Transverse colon (tissue), 4 donors: ENCODE measurements at regions of chr12 and their contacts with region 1.

Region 1: DNA sequence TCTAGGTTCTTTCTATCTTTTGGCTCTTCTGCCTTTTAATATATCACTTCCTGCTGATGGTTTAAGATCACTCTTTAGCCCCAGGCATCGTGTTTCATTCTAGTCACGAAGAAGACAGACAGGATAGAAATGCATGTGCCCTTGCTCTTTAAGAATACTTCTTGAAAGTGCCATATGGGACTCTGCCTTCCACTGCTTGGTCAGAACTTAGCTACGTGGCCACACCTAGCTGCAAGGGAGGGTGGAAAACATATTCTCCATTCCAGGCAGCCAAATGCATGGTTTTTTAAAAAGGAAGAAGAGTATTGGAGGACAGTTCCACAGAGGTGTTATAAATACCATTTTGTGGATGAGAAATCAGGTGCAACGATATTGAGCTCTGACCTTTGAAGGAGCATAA is 143.3 kb downstream of the KLRB1 start:
- DNase-seq: no peak
- H3K4me3 ChIP-seq: no peak overlapping the region
- H3K27ac ChIP-seq: no peak overlapping the region
- H3K4me1 ChIP-seq: no peaks in the 10 kb centered on the region
- H3K27me3 ChIP-seq: no peaks in the 10 kb centered on the region
- CTCF ChIP-seq: no peak
- EP300 ChIP-seq: no peak
- POLR2A ChIP-seq: no peak

Region 2: DNA sequence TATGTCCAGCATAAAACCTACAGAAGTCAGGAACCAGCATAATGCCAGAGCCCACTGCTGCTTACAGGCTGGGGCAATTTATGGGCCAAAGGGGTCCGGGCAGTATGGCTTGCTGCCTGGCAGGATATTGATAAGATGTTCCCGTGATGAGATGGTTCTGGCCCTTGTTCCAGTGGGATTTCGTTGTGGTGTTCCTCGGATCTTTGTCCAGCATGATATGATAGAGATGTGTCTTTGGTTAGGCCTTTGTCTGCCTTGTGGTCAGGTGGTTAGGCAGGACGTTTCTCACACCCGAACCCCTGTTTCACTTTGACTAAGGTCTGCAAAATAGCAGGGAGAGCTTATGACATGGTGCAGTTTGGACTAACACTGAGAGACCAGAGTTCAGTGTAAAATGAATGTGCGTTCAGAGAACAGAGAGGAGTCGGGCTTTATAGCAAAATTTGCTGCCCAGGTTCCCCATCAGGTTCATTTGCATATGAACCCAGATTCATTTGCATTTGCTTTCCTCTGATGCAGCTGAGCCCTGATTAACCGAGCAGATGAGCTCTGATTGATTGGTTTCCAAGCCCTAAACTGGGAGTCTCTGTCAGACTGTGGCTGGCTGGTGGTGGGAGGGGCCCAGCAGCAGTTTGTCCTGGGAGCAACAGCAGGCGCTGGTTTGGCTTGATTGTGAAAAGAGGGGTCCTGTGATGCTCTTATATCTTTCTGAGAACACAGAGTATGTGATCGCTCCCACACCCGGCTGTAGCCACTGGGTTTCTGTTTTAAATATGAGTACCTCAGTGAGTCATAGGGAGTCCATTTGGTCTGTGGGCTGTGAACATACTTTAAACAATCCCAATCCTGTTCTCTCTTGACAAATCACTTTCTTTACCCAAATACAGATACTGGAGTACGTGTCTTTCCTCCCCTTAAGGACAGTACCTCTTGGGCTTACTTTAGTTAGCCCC is 99.9 kb before region 1 on chr12:
- in situ Hi-C with region 1: loop called in 1 of 4 experiments (anchors 25 kb)
- intact Hi-C with region 1: no loop called
- DNase-seq: peak; percentile 23
- H3K4me3 ChIP-seq: no peak overlapping the region
- H3K27ac ChIP-seq: peak overlapping the region in 1 of 4 donors; percentile 35
- H3K4me1 ChIP-seq: peaks cover 0 to 3% (median 0%) of the 10 kb centered on the region in 4 donors
- H3K27me3 ChIP-seq: no peaks in the 10 kb centered on the region
- CTCF ChIP-seq: no peak
- EP300 ChIP-seq: no peak
- POLR2A ChIP-seq: no peak

Region 3: DNA sequence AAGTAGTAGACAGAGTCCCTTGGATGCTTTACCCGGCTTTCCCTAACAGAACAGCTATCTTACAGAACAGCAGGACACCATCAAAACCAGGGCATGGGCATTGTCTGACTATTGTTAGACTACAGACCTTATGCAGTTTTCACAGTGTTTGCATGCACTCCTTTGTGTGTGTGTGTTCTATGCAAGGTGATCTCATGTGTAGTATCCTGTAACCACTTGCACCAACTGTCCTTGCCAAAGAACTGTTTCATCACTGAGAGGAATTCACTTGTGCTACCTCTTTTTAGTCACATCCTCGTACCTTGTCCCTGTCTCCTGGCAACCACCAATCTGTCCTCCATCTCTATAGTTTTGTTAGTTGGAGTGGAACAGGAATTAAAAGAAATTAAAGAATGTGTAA is 72.6 kb before region 1 on chr12:
- in situ Hi-C with region 1: no loop called
- intact Hi-C with region 1: no loop called
- DNase-seq: no peak
- H3K4me3 ChIP-seq: no peak overlapping the region
- H3K27ac ChIP-seq: no peak overlapping the region
- H3K4me1 ChIP-seq: no peaks in the 10 kb centered on the region
- H3K27me3 ChIP-seq: no peaks in the 10 kb centered on the region
- CTCF ChIP-seq: no peak
- EP300 ChIP-seq: no peak
- POLR2A ChIP-seq: no peak

Region 4: GRCh38 chr12:9588749-9589148 is 124.3 kb after region 1 on chr12:
- in situ Hi-C with region 1: loop called in 1 of 4 experiments (anchors 25 kb)
- intact Hi-C with region 1: no loop called
- DNase-seq: no peak
- H3K4me3 ChIP-seq: no peak overlapping the region
- H3K27ac ChIP-seq: no peak overlapping the region
- H3K4me1 ChIP-seq: no peaks in the 10 kb centered on the region
- H3K27me3 ChIP-seq: no peaks in the 10 kb centered on the region
- CTCF ChIP-seq: no peak
- EP300 ChIP-seq: no peak
- POLR2A ChIP-seq: no peak